Activated CD8-positive, alpha-beta T cell treated with anti-CD3 and anti-CD28 coated beads, Interleukin-2, amount 10 ng/mL, durations not matched to agents 7 days and 5 days (primary cell): ENCODE measurements at regions of chr3 and their contacts with region 1.

Region 1: DNA sequence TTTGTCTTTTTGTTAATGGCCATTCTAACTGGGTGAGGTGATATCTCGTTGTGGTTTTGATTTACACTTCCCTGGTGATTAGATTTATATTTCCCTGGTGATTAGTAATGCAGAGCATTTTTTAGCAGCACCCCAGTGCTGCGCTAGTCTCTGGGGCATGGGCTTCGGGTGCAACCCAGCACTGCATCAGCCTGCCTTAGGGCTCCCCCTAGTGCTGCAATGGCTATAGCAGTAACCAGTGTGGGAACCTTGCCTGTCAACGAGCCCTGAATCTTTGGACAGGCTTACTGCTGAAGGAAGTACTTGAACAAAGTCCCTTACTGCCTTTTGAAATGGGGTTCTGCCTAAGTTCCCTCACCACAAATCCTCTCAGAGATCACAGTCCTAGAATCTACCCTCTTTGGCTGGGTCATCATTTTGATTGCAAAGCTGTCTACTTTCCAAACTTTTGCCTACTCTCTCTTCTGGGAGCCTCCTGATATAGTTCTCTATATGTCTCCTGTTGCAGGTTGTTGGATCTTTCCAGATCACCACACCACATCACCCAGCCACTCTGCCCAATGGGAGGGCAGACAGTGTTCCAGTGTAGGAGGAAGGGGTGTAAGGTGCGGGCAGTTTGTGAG is 79.2 kb upstream of the CCNL1 start:
- DNase-seq: peak; percentile 86
- ATAC-seq: peak; percentile 100
- H3K4me3 Mint-ChIP-seq: no peak overlapping the region
- H3K27ac Mint-ChIP-seq: no peak overlapping the region
- H3K4me1 Mint-ChIP-seq: peaks cover 4% of the 10 kb centered on the region
- H3K27me3 Mint-ChIP-seq: no peaks in the 10 kb centered on the region

Region 2: DNA sequence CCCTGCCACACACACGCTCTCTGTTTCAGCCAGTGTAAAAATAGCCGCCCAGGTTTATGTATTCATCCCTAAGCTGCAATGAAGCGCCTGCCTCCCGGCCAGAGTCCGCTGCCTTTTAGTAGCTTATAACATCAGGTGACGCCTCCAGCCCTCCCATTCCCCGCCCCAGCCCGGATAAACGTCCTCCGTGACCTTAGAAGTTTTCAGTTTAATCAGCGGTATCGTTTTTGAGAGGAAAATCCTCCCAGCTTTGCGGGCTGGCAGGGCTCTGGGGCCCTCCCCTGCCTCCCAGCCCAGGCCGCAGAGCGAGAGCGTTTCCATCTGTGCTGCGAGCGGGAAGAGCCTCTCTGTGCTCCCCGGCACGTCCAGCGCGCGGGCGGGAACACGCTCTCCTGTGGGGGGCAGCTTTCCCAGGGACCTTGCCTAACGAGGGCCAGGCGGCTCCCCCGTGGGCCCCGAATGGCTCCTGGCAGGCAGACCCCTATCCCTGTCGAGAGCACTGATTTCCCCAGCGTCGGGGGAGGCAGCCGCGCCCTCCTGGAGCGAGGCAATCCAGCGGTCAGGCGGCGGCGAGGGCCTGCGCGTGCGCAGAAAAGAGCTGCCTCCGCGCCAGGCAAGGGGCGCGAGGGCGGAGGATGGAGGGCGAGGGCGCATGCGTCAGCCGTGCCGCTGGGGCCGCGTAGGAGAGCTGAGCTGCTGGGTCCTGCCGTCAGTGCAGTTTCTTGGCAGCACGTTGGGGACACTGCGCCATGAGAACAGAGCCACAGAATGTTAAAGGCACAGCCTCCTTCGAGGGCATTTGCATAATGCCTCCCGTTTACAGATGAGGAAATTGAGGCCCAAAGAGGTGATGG is 150.4 kb before region 1 on chr3:
- CTCF ChIA-PET with region 1: no interaction called
- POLR2A ChIA-PET with region 1: no interaction called
- DNase-seq: peak; percentile 95
- ATAC-seq: peak; percentile 96
- H3K4me3 Mint-ChIP-seq: peak overlapping the region; percentile 80
- H3K27ac Mint-ChIP-seq: peak overlapping the region; percentile 94
- H3K4me1 Mint-ChIP-seq: peaks cover 51% of the 10 kb centered on the region
- H3K27me3 Mint-ChIP-seq: no peaks in the 10 kb centered on the region

Region 3: DNA sequence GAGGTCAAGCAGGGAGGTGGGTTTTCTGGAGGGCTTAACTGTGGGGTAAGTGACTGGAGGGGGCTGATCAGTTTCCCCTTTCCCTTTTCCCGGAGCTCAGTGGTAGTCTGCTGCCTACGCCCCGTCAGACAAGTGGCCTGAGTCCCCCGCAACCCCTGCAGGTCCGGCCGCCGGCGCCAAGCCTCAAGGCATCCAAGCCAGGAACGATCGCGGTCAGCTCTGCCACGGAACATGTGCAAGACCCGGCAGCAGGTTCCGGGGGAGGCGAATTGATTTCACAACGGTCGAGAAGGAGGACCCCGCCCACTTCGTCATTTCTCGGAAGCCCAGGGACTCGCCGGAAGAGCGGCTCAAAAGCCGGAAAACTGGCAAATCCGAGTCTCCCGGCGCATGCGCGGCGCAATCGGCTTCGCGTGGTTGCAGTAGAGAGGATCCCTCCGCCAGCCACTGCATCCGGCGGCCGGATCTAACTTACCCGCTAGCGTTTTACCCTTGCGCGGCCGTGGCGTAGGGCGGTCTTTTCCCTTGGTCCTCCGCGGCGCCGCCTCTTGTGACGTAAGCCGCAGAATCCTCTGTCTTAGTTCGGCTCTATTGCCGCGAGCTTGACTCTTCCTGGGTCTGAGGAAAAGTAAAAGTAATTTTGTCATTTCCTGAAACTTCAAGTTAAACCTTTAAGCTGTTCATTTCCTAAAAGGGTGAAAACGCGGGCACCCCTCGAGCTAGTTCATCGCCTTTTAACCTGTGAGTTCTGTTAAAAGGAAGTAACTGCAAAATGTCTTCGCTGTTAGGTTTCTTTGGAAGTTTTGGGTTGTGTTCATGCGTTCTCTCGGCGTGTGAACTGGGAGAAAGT is 64.3 kb before region 1 on chr3:
- CTCF ChIA-PET with region 1: interaction called, 10 read pairs
- POLR2A ChIA-PET with region 1: interaction called, 5 read pairs
- DNase-seq: peak; percentile 98
- ATAC-seq: peak; percentile 93
- H3K4me3 Mint-ChIP-seq: peak overlapping the region; percentile 96
- H3K27ac Mint-ChIP-seq: peak overlapping the region; percentile 98
- H3K4me1 Mint-ChIP-seq: peaks cover 30% of the 10 kb centered on the region
- H3K27me3 Mint-ChIP-seq: no peaks in the 10 kb centered on the region

Region 4: GRCh38 chr3:157201648-157202278 is 37.4 kb before region 1 on chr3:
- CTCF ChIA-PET with region 1: interaction called, 10 read pairs
- POLR2A ChIA-PET with region 1: no interaction called
- DNase-seq: no peak
- ATAC-seq: no peak
- H3K4me3 Mint-ChIP-seq: no peak overlapping the region
- H3K27ac Mint-ChIP-seq: no peak overlapping the region
- H3K4me1 Mint-ChIP-seq: no peaks in the 10 kb centered on the region
- H3K27me3 Mint-ChIP-seq: no peaks in the 10 kb centered on the region

Region 5: DNA sequence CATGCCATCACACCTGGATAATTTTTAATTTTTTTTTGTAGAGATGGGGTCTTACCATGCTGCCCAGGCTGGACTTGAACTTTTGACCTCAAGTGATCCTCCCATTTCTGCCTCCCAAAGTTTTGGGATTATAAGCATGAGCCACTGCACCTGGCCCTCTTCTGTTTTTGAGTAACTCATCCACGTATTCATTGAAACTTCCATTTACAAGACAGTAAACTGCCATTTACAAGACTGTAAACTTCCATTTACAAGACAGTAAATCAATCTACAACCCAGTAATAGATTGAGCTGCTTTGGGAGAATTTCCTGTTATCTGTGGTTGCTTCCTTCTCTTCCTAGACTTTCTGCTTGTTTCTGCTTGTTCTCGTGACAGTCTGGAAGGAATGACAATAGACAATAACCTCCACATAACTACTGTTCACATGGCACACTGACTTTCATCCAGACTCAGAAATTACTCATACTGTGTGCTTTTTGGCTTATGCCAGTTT is 35.5 kb after region 1 on chr3:
- CTCF ChIA-PET with region 1: no interaction called
- POLR2A ChIA-PET with region 1: no interaction called
- DNase-seq: no peak
- ATAC-seq: no peak
- H3K4me3 Mint-ChIP-seq: no peak overlapping the region
- H3K27ac Mint-ChIP-seq: no peak overlapping the region
- H3K4me1 Mint-ChIP-seq: no peaks in the 10 kb centered on the region
- H3K27me3 Mint-ChIP-seq: no peaks in the 10 kb centered on the region

Region 6: DNA sequence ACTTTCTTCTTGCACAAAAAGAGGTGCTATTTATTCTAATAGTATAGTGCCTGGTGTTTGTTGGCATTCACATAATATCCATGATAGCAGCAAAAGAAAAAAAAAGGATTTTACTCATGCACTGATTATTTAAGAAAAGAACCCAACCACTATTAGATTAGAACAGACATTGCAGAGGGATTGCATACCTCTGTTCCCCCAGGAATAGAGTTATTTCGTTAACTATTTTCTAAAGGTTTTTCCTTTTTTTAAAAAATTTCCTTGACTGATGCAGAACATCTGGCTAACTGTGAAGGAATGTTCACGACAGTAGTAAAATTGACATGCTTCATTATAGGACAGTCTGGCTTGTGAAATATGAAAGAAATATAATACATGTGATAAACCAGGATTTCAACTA is 60.9 kb after region 1 on chr3:
- CTCF ChIA-PET with region 1: no interaction called
- POLR2A ChIA-PET with region 1: no interaction called
- DNase-seq: no peak
- ATAC-seq: no peak
- H3K4me3 Mint-ChIP-seq: no peak overlapping the region
- H3K27ac Mint-ChIP-seq: no peak overlapping the region
- H3K4me1 Mint-ChIP-seq: no peaks in the 10 kb centered on the region
- H3K27me3 Mint-ChIP-seq: no peaks in the 10 kb centered on the region

Region 7: DNA sequence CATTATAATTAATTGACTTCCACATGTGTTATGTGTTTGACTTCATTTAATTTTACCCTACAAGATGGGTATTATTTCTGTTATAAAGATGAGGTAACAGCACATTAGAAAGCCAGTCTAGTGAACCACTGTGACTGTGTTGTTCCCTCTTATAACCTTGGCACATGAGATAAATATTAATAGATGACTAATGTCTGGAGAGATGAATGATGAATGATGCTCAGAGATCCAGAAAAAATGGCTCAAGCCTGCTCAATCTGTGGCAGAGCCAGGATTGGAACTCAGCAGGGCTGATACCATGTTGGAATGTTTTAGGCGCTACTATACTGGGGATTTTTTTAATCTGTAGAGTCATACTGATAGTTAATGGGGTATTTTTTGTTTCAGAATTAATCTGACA is 78.7 kb after region 1 on chr3:
- CTCF ChIA-PET with region 1: no interaction called
- POLR2A ChIA-PET with region 1: no interaction called
- DNase-seq: no peak
- ATAC-seq: no peak
- H3K4me3 Mint-ChIP-seq: no peak overlapping the region
- H3K27ac Mint-ChIP-seq: no peak overlapping the region
- H3K4me1 Mint-ChIP-seq: no peaks in the 10 kb centered on the region
- H3K27me3 Mint-ChIP-seq: no peaks in the 10 kb centered on the region